ENCODE measurements at regions of chrX and their contacts with region 1.

Region 1: DNA sequence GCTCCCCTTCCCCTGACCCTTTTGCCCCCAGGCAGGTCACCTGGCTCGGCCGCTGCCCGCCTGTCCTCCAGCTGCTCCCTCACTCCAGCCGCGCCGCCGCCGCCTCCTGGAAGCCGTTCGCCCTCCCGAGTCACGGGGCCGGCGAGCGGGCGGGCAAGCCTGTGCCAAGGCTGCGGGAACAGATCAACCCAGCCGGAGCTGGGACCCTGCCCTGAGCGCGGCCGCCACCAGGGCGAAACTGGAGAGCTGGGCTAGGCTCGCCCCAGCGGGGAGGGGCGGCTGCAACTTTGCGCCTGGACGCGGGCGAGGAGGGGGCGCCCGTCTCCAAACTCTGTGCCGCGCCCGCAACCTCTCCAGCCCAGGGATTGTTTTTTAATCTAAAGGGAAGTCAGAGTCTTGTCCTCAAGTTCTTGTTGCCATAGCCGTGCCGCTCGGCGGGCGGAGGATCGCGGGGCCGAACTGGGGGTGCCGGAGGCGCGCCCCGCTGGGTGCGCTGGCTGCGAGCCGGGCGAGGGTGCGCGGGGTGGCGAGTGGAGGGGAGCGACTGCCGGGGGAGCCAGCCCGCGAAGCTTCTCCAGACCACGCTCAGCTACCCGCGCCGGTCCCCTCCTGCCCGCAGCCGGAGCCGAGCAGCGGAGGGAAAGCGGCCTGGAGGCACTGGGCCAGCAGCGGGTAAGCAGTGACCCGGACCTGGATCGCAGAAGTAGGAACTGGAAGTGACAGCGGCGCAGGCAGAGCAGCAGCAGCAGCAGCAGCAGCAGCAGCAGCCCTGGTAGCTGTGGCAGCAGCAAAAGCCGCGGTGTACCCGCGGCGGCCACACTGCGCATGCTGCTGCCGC is 13.4 kb downstream of the ARHGEF6 start:
- DNase-seq: peak; percentile 65 to 88 (median 80)
- H3K4me3 ChIP-seq: peak overlapping the region; percentile 62 to 80 (median 70)
- H3K27ac ChIP-seq: peak overlapping the region; percentile 7 to 74
- H3K4me1 ChIP-seq: peaks cover 9 to 44% (median 28%) of the 10 kb centered on the region in 4 experiments
- H3K27me3 ChIP-seq: peaks cover 0 to 8% (median 0%) of the 10 kb centered on the region in 5 experiments

Region 2: DNA sequence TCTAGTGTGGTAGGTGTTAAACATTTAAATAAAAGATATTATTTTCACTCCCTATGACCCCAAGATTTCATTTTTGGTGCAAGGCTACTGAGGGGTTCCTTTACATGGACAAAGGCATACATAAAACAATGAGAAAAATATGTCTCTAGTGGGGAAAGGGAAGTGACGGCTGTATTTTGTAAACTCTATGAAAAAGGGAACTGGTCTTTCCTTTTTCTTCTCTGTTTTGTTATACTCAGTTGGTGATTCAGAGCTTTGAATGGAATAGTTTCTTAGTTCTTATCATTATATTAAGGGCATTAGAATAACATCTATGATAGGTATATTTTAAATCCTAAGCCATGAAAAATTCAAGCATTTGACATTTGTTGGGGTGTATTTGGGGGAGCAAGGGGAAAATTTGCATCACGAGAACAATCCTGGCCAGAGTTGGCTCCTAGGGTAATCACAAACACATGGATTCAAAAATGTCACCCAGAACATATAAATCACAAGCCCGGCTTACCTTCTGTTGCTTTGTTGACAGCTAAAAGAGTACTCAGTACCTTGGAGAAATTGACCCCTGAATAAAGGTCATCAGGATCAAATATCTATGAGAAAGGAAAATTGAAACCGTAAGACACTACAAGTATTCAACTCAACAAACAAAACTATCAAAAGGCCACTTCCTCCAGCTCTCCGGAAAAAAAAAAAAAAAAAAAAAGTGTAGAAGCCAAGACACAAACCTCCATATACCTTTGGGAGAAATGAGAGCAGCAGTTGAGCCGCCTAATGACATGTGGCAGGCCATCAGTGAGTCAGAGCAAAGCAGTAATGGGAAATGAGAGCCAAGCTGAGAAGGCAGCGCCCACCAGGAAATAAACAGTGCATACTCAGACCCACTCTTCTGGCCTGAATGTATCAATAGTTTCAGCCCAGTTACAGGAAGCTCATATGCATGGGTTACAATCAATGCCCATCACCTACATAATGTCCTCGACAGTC is 20.0 kb before region 1 on chrX:
- CTCF ChIA-PET with region 1: interaction called, 15 read pairs
- POLR2A ChIA-PET with region 1: no interaction called
- DNase-seq: peak in 2 of 3 donors; percentile 61 to 66
- H3K4me3 ChIP-seq: peak overlapping the region in 1 of 7 experiments; percentile 17
- H3K27ac ChIP-seq: peak overlapping the region; percentile 12 to 69
- H3K4me1 ChIP-seq: peaks cover 45 to 87% (median 57%) of the 10 kb centered on the region in 4 experiments
- H3K27me3 ChIP-seq: no peaks in the 10 kb centered on the region

Region 3: GRCh38 chrX:136779346-136779781 is 12.0 kb after region 1 on chrX:
- CTCF ChIA-PET with region 1: interaction called, 14 read pairs
- POLR2A ChIA-PET with region 1: interaction called, 12 read pairs
- DNase-seq: peak; percentile 52 to 84 (median 74)
- H3K4me3 ChIP-seq: peak overlapping the region in 6 of 7 experiments; percentile 58 to 89 (median 79)
- H3K27ac ChIP-seq: peak overlapping the region; percentile 53 to 90
- H3K4me1 ChIP-seq: peaks cover 9 to 48% (median 25%) of the 10 kb centered on the region in 4 experiments
- H3K27me3 ChIP-seq: no peaks in the 10 kb centered on the region

Measured in common myeloid progenitor, CD34-positive (primary cell).